ENCODE measurements at regions of chr11 and their contacts with region 1.

Region 1: GRCh38 chr11:46537537-46538295 is 56.1 kb downstream of the AMBRA1 start:
- DNase-seq: peak; percentile 57
- ATAC-seq: peak; percentile 74

Region 2: DNA sequence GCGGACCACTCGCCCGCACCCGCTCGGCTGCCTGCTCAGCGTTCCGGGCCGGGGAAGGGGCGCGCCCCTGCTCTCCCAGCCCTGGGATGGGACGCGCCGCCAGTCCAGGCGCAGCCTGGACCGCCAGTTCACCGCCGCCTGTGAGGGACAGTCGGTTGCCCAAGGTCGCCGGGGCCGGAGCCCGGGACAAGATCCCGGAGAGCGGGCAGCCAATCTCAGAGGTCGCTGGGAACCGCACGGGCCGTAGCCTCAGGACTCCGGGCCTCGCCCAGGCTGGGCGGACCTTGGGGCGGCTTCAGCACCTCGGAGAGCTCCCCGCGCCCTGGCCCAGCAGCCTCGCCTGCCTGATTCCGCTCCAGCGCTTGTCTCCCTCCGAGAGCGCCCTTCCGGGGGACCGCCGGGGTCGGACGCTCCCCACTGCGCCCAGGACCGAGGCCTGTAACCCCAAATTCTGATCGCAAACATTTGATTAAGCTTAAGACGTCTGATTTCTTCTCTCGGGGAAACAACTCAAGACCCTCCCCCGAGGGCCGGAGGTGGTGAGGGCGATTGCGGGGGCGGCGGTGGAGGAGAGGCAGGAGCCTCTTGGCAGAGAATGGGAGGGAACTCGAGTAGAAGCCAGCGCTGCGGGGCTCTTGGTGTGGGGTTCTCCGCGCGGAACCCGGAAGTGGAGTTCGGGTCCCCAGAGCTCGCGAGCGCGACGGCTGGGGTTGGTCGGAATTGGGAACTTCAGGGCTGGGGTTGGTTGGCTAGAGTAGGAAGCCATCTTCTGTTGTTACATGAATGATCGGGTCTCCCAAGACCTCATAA is 145.1 kb before region 1 on chr11:
- intact Hi-C with region 1: loop called (anchors 5 kb)
- DNase-seq: peak; percentile 92
- ATAC-seq: peak; percentile 92

Region 3: DNA sequence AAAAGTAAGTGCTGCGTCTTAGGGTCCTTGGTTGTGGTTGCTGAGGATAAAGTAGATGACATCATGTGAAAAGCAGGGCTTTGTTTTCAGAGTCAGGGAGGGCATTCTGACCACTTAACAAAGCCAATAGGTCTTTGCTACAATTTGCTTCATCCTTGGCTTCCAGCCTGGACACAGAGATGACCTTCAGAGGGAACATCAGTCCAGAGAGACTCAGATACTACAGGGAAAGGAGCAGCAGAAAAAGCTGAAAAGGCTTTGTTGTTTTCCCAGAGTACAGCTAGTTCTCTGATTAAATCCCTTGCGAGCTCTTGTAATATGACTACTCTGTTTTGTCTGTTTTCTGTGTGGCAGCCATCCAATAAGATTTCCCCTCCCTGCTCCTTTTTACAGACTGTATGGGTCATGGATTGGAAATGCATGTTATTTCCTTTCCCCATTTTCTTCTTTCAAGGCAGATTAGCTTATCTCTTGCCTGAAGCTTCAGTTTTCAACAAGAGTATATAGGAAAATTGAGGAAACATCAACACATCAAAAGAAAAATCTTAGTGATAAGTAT is 111.5 kb after region 1 on chr11:
- intact Hi-C with region 1: no loop called
- DNase-seq: no peak
- ATAC-seq: peak; percentile 95

Measured in left ventricle myocardium superior (tissue), 1 donor.